IMR-90 (cell line): ENCODE measurements at regions of chr11 and their contacts with region 1.

Region 1: GRCh38 chr11:76207642-76208401 is 1.5 kb upstream of the WNT11 start:
- DNase-seq: peak; percentile 57
- ATAC-seq: peak; percentile 85
- H3K4me3 ChIP-seq: peak overlapping the region; percentile 41
- H3K27ac ChIP-seq: no peak overlapping the region
- H3K4me1 ChIP-seq: peaks cover 3% of the 10 kb centered on the region
- H3K27me3 ChIP-seq: peaks cover 87% of the 10 kb centered on the region
- CTCF ChIP-seq: peak; percentile 96
- POLR2A ChIP-seq: no peak
- RAD21 ChIP-seq: peak; percentile 90

Region 2: DNA sequence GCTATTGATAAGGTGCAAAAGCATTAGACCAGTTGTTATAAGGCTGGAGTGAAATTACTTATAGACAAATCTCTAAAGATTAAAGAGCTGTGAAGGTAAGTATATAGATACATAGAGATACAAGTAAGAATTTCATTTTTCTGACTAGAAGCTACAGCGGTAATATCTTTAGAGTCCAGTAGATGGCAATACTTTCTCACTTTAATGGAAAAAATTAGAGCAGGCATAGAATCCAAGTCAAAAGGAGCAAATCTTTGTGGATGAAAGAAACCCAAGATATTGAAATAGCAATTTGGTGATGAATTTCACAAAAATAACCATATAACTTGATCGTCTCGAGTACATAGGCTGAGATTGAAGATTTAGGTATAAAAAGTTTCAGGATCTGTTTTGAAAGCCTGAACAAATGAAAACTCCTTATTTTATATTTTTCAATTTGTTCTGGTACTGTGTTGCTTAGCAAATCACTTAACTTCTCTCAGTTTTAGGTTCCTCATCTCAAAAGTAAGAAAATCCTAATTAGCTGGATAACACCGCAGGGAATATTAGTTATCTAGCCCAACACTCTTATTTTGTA is 310.9 kb before region 1 on chr11:
- CTCF ChIA-PET with region 1: interaction called, 4 read pairs
- POLR2A ChIA-PET with region 1: no interaction called
- dilution Hi-C with region 1: no loop called
- in situ Hi-C with region 1: no loop called
- intact Hi-C with region 1: loop called (anchors 1 kb)
- DNase-seq: peak; percentile 55
- ATAC-seq: peak; percentile 62
- H3K4me3 ChIP-seq: no peak overlapping the region
- H3K27ac ChIP-seq: no peak overlapping the region
- H3K4me1 ChIP-seq: no peaks in the 10 kb centered on the region
- H3K27me3 ChIP-seq: no peaks in the 10 kb centered on the region
- CTCF ChIP-seq: peak; percentile 76
- POLR2A ChIP-seq: no peak
- RAD21 ChIP-seq: peak; percentile 85

Region 3: GRCh38 chr11:76444384-76445123 is 236.7 kb after region 1 on chr11 and contains the start of gene EMSY:
- CTCF ChIA-PET with region 1: no interaction called
- POLR2A ChIA-PET with region 1: no interaction called
- dilution Hi-C with region 1: no loop called
- in situ Hi-C with region 1: no loop called
- intact Hi-C with region 1: loop called (anchors 5 kb)
- DNase-seq: peak; percentile 100
- ATAC-seq: peak; percentile 94
- H3K4me3 ChIP-seq: peak within 1 kb of the TSS; percentile 68
- H3K27ac ChIP-seq: peak within 1 kb of the TSS; percentile 82
- H3K4me1 ChIP-seq: no peaks in the 10 kb centered on the region
- H3K27me3 ChIP-seq: no peaks in the 10 kb centered on the region
- CTCF ChIP-seq: no peak
- POLR2A ChIP-seq: peak; percentile 97
- RAD21 ChIP-seq: no peak
- total RNA-seq, gene EMSY: 22.0 and 28.9 TPM in 2 replicates

Region 4: DNA sequence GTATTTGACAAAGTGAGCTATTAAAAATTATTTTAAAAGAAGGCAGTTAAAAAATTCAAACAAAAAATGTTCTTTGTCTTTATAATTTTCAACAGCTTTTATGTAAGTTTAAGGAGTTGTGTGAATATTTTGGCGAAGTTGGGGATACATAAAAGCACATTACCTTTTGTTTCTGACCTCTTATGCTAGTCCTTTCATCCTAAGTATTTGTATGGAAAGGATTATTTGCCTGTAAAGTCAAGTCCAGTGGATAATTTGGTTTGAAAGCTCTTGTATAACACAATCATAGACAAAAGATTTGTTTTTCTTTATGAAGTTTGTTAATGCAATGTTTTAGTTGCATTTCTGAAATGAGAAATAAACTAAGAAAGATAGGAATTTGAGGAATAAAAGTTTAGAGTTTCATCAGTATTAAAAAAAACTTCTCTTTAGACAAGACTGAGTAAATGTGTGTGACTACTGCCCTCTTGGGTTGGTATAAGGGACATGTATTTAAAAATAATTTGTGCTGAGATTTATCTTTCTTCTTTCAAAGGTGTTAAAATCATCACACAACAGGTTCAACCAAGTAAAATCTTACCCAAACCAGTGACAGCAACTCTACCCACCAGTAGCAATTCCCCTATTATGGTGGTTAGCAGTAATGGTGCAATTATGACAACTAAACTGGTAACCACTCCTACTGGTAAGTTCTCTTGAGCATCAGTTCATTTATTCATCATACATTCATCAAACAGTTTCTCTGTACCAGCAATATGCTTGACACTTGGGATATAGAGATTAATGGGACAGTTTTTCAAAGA is 305.2 kb after region 1 on chr11:
- CTCF ChIA-PET with region 1: interaction called, 4 read pairs
- POLR2A ChIA-PET with region 1: no interaction called
- dilution Hi-C with region 1: no loop called
- in situ Hi-C with region 1: no loop called
- intact Hi-C with region 1: loop called (anchors 1 kb)
- DNase-seq: peak; percentile 65
- ATAC-seq: peak; percentile 80
- H3K4me3 ChIP-seq: no peak overlapping the region
- H3K27ac ChIP-seq: no peak overlapping the region
- H3K4me1 ChIP-seq: peaks cover 3% of the 10 kb centered on the region
- H3K27me3 ChIP-seq: no peaks in the 10 kb centered on the region
- CTCF ChIP-seq: peak; percentile 67
- POLR2A ChIP-seq: no peak
- RAD21 ChIP-seq: peak; percentile 73

Region 5: DNA sequence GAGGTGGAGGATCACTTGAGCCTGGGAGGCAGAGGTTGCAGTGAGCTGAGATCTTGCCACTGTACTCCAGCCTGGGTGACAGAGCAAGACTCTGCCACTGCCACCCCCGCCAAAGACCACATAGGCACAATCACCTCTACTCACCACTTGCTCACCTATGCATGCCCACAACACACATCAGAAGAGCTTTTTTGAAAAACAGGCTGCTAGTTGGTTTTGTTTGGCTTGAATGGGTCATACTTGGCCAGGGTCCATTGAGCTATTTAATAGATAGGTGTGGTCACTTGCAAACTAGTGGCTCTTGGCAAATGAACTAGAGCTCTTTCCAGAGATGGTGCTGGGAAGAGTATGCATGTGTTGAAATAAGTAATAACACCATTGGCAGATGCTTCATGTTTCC is 317.1 kb after region 1 on chr11:
- CTCF ChIA-PET with region 1: no interaction called
- POLR2A ChIA-PET with region 1: no interaction called
- dilution Hi-C with region 1: no loop called
- in situ Hi-C with region 1: loop called (anchors 10 kb)
- intact Hi-C with region 1: no loop called
- DNase-seq: peak; percentile 44
- ATAC-seq: no peak
- H3K4me3 ChIP-seq: no peak overlapping the region
- H3K27ac ChIP-seq: no peak overlapping the region
- H3K4me1 ChIP-seq: peaks cover 6% of the 10 kb centered on the region
- H3K27me3 ChIP-seq: no peaks in the 10 kb centered on the region
- CTCF ChIP-seq: no peak
- POLR2A ChIP-seq: no peak
- RAD21 ChIP-seq: no peak

Region 6: DNA sequence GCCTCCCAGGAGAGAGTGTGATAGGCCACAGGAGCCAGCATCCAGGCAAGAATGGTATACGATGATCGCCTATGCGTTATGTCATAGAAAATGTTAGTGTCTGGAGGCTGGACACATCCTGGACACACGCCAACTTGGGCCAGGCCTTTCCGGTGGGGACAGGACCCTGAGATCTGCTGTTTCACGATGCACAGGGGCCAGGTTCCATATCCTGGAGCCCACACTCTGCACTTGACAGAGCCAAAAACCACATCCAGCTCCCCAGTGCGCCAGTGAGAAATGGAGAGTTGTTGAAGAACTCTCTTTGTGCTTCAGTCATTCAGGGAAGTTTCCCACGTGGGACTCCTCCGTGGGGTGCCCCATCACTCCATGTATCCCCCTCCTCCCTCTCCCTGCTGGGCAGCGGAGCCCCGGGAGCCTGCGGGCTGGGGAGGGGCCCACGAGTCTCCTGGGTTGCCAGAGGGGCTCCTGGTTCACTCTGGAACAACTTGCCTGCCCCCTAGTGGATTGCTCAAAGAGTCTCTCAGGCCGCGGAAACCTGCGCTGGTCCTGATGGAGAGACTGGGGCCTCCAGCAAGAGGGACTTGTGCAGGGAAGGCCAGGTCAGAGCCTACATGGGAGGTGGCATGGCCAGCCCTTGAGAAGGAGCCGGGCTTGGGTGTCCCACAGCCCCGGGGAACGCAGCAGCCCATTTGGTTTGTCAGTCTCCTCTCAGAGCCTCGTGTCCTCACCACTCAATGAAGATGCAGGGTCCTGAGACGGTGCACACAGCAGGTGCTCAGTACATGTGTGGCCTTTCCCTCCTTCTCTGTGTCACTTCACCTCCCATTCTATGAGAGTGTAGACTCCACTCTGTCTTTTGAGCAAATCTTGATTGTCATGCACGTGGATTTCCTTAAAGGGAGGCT is 472.9 kb after region 1 on chr11:
- CTCF ChIA-PET with region 1: no interaction called
- POLR2A ChIA-PET with region 1: no interaction called
- dilution Hi-C with region 1: no loop called
- in situ Hi-C with region 1: loop called (anchors 10 kb)
- intact Hi-C with region 1: loop called (anchors 10 kb)
- DNase-seq: peak; percentile 66
- ATAC-seq: peak; percentile 92
- H3K4me3 ChIP-seq: no peak overlapping the region
- H3K27ac ChIP-seq: no peak overlapping the region
- H3K4me1 ChIP-seq: peaks cover 4% of the 10 kb centered on the region
- H3K27me3 ChIP-seq: peaks cover 13% of the 10 kb centered on the region; the same call in 1 of the 2 replicates
- CTCF ChIP-seq: peak; percentile 85
- POLR2A ChIP-seq: 0 out of 2 replicates have a peak, but pooled peaks have one; percentile 33
- RAD21 ChIP-seq: peak; percentile 90